Activated CD4-positive, alpha-beta T cell treated with anti-CD3 and anti-CD28 coated beads for 36 hours (primary cell): ENCODE measurements at regions of chr2 and their contacts with region 1.

Region 1: DNA sequence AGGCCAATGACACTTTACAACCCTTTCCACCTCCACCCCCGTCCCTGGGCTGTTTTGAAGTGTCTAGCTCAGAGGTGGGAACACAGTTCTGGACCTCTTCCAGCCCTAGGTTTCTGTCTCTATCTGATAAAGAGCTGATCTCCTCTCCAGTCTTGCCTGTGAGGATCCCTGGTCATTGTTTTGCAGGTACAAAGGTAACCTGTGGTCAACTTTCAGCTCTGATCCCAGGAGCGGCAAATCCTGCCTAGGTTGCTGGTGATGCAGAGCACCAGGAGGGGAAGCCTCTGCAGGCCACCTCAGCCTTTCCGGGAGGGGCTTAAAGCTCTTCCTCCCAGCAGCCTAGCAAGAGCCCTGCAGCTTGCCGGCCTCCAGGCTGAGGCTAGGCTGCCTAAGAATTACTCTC is 69.8 kb upstream of the WIPF1 start:
- DNase-seq: peak; percentile 22
- ATAC-seq: peak; percentile 66
- H3K4me3 Mint-ChIP-seq: no peak overlapping the region
- H3K27ac Mint-ChIP-seq: no peak overlapping the region
- H3K4me1 Mint-ChIP-seq: peaks cover 28% of the 10 kb centered on the region
- H3K27me3 Mint-ChIP-seq: no peaks in the 10 kb centered on the region

Region 2: GRCh38 chr2:174688079-174688478 is 20.7 kb after region 1 on chr2:
- CTCF ChIA-PET with region 1: interaction called, 14 read pairs
- POLR2A ChIA-PET with region 1: no interaction called
- intact Hi-C with region 1: no loop called
- DNase-seq: no peak
- ATAC-seq: peak; percentile 70
- H3K4me3 Mint-ChIP-seq: no peak overlapping the region
- H3K27ac Mint-ChIP-seq: no peak overlapping the region
- H3K4me1 Mint-ChIP-seq: peaks cover 19% of the 10 kb centered on the region
- H3K27me3 Mint-ChIP-seq: no peaks in the 10 kb centered on the region

Region 3: GRCh38 chr2:174878537-174879147 is 211.3 kb after region 1 on chr2:
- CTCF ChIA-PET with region 1: no interaction called
- POLR2A ChIA-PET with region 1: no interaction called
- intact Hi-C with region 1: no loop called
- DNase-seq: no peak
- ATAC-seq: no peak
- H3K4me3 Mint-ChIP-seq: no peak overlapping the region
- H3K27ac Mint-ChIP-seq: no peak overlapping the region
- H3K4me1 Mint-ChIP-seq: no peaks in the 10 kb centered on the region
- H3K27me3 Mint-ChIP-seq: no peaks in the 10 kb centered on the region